ENCODE measurements at regions of chr3 and their contacts with region 1.

Region 1: GRCh38 chr3:48898383-48899234 is at the start of gene SLC25A20:
- DNase-seq: peak; percentile 91 to 96 (median 92)
- ATAC-seq: peak; percentile 97
- H3K4me3 ChIP-seq: peak within 1 kb of the TSS; percentile 73
- H3K27ac ChIP-seq: peak within 1 kb of the TSS; percentile 64
- H3K4me1 ChIP-seq: peaks cover 7 to 12% of the 10 kb centered on the region in 2 experiments; a peak in 3 of 5 replicates
- H3K27me3 ChIP-seq: no peaks in the 10 kb centered on the region
- CTCF ChIP-seq: 0 out of 6 replicates have a peak, but pooled peaks of 1 of the 3 experiments have one; percentile 6
- EP300 ChIP-seq: no peak; the same call in 1 of the 2 replicates
- POLR2A ChIP-seq: peak; percentile 56; the same call in 1 of the 2 replicates
- RAD21 ChIP-seq: no peak
- polyA plus RNA-seq, gene SLC25A20: 19.0 to 20.9 TPM

Region 2: DNA sequence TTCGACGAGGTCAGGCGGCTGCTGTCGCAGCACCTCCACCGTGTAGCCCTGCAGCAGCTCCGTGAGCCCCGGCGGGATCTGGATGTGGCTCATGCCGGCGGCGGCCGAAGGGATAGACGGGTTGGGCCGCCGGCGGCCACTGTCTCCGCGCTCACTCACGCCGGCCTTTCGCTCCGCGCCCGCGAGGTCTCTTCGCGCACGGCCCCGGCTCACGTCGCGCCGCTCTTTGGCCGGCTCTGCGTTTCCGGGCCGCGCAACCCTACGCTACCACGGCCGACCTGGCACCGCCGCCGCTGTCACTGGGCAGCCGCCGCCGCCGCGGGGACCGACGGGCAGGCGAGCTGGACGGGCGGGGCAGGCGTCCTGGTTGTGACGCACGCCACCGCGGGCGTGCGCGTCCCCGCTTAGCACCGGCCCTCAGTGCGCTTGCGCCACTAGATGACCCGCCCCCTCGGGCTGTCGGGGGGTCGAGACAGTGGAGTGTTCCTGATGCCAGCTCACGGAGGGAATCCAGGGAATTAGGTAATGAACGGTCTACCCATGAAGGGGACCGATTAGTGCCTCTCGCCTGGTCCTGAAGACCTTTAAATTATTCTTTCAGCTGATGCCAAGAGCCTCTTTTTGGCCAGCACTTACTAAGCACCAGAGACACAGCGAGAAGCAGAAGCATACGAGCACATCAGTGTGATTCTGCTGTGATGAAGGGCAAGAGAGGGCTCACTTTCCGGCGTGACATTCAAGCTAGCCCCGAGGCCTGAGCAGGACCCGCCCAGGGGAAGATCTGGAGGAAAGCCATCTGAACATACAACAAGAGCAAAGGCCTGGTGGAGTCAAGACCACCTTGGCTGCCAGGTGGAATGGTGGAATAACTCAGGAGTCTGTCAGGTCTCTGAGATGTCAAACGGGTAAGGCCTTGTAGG is 50.8 kb before region 1 on chr3 and contains the start of gene PRKAR2A:
- CTCF ChIA-PET with region 1: no interaction called
- POLR2A ChIA-PET with region 1: no interaction called
- in situ Hi-C with region 1: no loop called
- intact Hi-C with region 1: loop called (anchors 5 kb)
- DNase-seq: peak; percentile 90 to 93 (median 92)
- ATAC-seq: peak; percentile 88
- H3K4me3 ChIP-seq: peak within 1 kb of the TSS; percentile 81
- H3K27ac ChIP-seq: peak within 1 kb of the TSS; percentile 87
- H3K4me1 ChIP-seq: peaks cover 13% of the 10 kb centered on the region in 2 experiments; a peak in 4 of 5 replicates
- H3K27me3 ChIP-seq: no peaks in the 10 kb centered on the region
- CTCF ChIP-seq: no peak
- EP300 ChIP-seq: no peak
- POLR2A ChIP-seq: peak; percentile 61; the same call in 1 of the 2 replicates
- RAD21 ChIP-seq: no peak
- polyA plus RNA-seq, gene PRKAR2A: 15.9 to 19.8 TPM